ENCODE measurements at regions of chr16 and their contacts with region 1.

Region 1: GRCh38 chr16:11977376-11978041 is 975 bp downstream of the SNX29 start:
- DNase-seq: peak; percentile 63 to 75
- H3K4me3 ChIP-seq: peak overlapping the region; percentile 82 to 93
- H3K27ac ChIP-seq: peak overlapping the region; percentile 75 to 87
- H3K4me1 ChIP-seq: peaks cover 0 to 23% (median 13%) of the 10 kb centered on the region in 4 donors
- H3K27me3 ChIP-seq: no peaks in the 10 kb centered on the region
- CTCF ChIP-seq: no peak

Region 2: DNA sequence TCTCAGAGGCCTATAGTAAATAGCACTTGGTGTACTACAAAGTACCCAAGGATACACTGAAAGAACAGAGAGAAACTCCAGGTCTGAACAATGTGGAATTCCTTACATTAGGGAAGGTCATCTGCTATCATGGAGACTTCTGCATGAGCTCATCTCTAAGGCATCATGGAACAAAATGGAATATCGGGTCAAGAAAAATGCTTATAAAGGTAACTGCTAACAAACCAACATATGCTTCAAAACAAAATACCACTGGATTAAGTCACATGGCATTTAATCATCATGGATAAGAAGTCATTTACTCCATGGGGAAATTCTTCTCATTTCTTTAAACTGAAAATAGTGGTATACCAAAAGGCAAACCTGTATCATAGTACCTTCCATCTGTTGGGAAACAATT is 269.1 kb before region 1 on chr16:
- intact Hi-C with region 1: no loop called
- DNase-seq: no peak
- H3K4me3 ChIP-seq: no peak overlapping the region
- H3K27ac ChIP-seq: no peak overlapping the region
- H3K4me1 ChIP-seq: peaks cover 0 to 16% (median 9%) of the 10 kb centered on the region in 4 donors
- H3K27me3 ChIP-seq: no peaks in the 10 kb centered on the region
- CTCF ChIP-seq: no peak

Region 3: DNA sequence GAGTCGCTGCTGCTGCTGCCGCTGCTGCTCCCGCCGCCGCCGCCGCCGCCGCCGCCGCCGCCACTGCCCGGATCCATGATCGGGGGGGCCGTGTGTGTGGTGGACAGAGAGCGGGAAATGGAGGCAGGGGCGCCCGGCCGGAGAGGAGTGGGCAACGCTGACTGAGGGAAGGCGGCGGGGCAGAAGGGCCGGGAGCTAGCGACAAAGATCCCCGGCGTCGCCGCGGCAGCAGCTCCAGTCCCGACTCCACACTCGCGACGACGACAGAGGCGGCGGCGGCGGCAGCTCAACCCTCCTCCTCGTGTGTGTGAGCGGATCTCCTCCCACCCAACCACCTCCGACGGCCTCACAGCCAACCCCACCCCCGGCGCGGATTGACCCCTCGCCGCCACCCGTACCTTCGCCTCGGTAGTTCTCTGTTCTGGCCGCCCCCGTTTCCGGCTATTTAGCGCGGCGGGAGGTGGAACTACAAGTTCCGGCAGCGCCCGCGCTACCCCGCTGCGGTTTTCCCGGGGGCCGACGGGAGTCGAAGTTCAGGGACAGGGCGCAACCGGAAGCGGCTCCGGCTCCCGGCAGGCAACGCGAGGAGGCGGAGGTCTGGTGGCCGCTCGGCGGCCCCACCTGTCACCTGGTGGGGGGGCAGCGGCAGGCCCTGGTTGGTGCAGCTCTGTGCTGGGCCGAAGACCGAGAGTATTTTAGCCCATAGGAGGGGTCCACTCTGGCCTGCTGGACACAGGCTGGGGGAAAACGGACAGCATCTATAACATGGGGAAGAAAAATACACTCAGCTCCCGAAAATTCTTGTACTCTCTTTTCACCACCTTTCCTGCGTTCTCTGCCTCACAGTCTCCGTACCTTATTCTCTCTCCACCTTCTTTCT is 61.6 kb before region 1 on chr16 and contains the start of gene GSPT1:
- intact Hi-C with region 1: loop called (anchors 10 kb)
- DNase-seq: peak; percentile 98 to 99
- H3K4me3 ChIP-seq: peak within 1 kb of the TSS; percentile 80 to 96
- H3K27ac ChIP-seq: peak within 1 kb of the TSS; percentile 91 to 94
- H3K4me1 ChIP-seq: peaks cover 0 to 37% (median 24%) of the 10 kb centered on the region in 4 donors
- H3K27me3 ChIP-seq: no peaks in the 10 kb centered on the region
- CTCF ChIP-seq: peak; percentile 19 to 60

Region 4: DNA sequence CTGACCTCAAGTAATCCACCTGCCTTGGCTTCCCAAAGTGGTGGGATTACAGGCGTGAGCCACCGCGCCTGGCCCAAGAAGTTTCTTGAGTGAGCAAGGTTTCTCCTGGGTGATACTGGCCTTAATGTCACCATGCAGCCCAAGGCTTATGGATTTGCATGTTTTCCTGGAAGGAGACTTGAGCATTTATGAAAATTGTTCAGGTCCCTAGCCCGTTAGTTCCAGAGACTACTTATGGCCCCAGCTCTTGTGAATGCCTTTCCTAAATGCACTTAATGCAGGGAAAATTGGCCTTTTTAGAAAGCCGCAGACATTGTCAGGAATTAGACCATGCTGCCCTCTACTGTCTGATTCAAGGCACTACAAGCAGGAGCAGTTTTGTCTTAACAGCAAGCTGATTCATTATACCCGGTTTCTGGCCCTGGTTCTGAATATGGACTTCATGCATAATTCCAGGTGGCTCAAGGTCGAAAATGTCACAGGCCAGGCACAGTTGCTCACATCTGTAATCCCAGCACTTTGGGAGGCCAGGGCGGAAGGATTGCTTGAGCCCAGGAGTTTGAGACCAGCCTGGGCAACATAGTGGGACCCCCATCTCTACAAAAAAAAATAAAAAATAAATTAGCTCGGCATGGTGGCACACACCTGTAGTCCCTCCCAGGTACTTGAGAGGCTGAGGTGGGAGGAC is 90.3 kb after region 1 on chr16:
- intact Hi-C with region 1: loop called (anchors 10 kb)
- DNase-seq: peak in 1 of 2 donors; percentile 71
- H3K4me3 ChIP-seq: no peak overlapping the region
- H3K27ac ChIP-seq: no peak overlapping the region
- H3K4me1 ChIP-seq: peaks cover 0 to 15% (median 7%) of the 10 kb centered on the region in 4 donors
- H3K27me3 ChIP-seq: no peaks in the 10 kb centered on the region
- CTCF ChIP-seq: peak; percentile 84 to 93

Region 5: DNA sequence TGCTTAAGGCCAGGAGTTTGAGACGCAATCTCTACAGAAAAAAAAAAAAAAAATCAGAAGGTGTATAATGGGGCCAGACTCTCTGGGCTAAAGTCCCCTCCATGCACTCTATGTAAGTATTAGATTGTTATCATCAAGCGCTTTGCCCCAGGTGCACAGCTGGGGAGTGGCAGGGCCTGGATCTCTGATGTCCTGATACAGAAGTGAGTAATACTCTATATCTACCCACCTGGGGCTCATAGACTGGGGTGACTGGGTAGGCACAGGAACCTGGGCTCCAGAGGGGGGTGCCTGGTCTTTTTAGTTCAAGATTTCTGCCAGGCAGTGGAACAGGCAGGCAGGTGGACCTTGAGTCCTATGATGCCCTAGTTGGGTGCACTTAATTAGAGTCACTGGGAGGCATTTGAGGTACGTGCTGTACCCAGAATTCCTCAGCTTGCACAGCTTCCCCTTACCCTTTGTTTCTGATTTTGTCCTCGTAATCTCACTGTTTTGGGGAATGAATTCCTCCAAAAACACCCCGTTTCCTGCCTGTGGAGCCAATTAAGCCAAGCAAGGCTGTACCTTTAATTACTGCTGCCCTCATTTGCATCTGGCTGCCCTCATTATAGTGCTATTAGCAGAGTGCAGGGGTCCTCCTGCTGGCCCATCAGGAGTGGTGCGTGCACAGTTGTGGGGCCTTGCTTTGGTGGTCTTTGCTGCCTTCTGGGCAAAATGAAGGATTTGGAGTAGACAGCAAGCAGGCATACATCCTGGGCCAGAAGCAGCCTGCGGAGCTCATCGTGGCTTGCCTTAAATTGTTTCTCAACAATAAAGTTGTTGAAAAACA is 238.0 kb after region 1 on chr16:
- intact Hi-C with region 1: no loop called
- DNase-seq: no peak
- H3K4me3 ChIP-seq: no peak overlapping the region
- H3K27ac ChIP-seq: no peak overlapping the region
- H3K4me1 ChIP-seq: no peaks in the 10 kb centered on the region
- H3K27me3 ChIP-seq: no peaks in the 10 kb centered on the region
- CTCF ChIP-seq: no peak

Measured in tibial artery (tissue), 4 donors.